IMR-90 (cell line): ENCODE measurements at regions of chr2 and their contacts with region 1.

Region 1: DNA sequence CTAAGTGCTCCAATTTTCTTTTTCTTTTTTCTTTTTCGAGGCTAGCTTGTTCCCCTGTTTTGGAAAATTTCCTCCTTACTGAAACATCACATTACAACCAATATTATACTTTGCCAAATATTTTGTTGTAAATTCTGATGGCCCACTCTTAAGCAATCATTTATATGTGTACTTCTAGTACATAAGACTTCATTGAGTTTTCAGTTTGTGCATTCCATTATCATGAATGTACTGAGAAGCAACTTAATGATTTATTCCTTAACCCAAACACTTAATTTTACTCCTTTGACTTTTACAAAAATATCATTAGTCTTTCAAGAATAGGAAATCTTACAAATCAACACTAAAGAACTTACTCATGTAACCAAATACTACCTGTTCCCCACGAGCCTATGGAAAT is 242.4 kb downstream of the ARHGAP15 start:
- DNase-seq: peak; percentile 12
- ATAC-seq: no peak
- H3K4me3 ChIP-seq: no peak overlapping the region
- H3K27ac ChIP-seq: no peak overlapping the region
- H3K4me1 ChIP-seq: 0 out of 2 replicates have a peak, but pooled peaks cover 1% of the 10 kb centered on the region
- H3K27me3 ChIP-seq: no peaks in the 10 kb centered on the region
- CTCF ChIP-seq: no peak
- POLR2A ChIP-seq: no peak
- RAD21 ChIP-seq: no peak

Region 2: GRCh38 chr2:142883526-142883925 is 488.1 kb before region 1 on chr2:
- CTCF ChIA-PET with region 1: no interaction called
- POLR2A ChIA-PET with region 1: no interaction called
- dilution Hi-C with region 1: no loop called
- in situ Hi-C with region 1: no loop called
- intact Hi-C with region 1: no loop called
- DNase-seq: no peak
- ATAC-seq: no peak
- H3K4me3 ChIP-seq: no peak overlapping the region
- H3K27ac ChIP-seq: no peak overlapping the region
- H3K4me1 ChIP-seq: no peaks in the 10 kb centered on the region; the same call in 1 of the 2 replicates
- H3K27me3 ChIP-seq: no peaks in the 10 kb centered on the region
- CTCF ChIP-seq: no peak
- POLR2A ChIP-seq: no peak
- RAD21 ChIP-seq: no peak

Region 3: DNA sequence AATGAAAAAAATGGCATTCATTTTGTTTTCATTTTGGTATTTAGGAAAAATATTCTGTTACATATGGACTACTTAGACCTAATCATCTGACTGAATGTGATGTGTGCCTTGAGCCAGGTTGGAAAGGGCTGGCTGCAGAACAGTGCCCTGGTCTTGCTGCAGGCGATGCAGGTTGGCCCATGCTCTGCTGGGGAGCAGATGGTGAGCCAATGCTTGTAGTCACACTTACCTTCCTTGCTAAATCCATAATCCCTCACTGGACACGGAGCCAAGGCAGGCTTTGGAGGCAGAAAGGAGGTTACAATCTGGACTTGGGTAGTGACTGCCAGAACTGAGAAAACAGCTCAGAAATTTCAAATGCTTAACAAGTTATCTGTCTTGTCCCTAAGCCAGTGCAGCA is 13.7 kb before region 1 on chr2:
- CTCF ChIA-PET with region 1: no interaction called
- POLR2A ChIA-PET with region 1: no interaction called
- dilution Hi-C with region 1: no loop called
- in situ Hi-C with region 1: no loop called
- intact Hi-C with region 1: loop called (anchors 2 kb)
- DNase-seq: no peak
- ATAC-seq: no peak
- H3K4me3 ChIP-seq: no peak overlapping the region
- H3K27ac ChIP-seq: no peak overlapping the region
- H3K4me1 ChIP-seq: no peaks in the 10 kb centered on the region
- H3K27me3 ChIP-seq: no peaks in the 10 kb centered on the region
- CTCF ChIP-seq: no peak
- POLR2A ChIP-seq: no peak
- RAD21 ChIP-seq: no peak